ENCODE measurements at regions of chr15 and their contacts with region 1.

Region 1: GRCh38 chr15:59372352-59373211 is at the start of gene MYO1E:
- DNase-seq: peak; percentile 92
- H3K4me3 ChIP-seq: peak within 1 kb of the TSS; percentile 63 to 84 (median 74)
- H3K27ac ChIP-seq: peak within 1 kb of the TSS; percentile 94 to 96 (median 96)
- H3K4me1 ChIP-seq: peaks cover 0 to 32% (median 7%) of the 10 kb centered on the region in 4 donors
- H3K27me3 ChIP-seq: no peaks in the 10 kb centered on the region
- CTCF ChIP-seq: no peak
- EP300 ChIP-seq: no peak
- POLR2A ChIP-seq: peak; percentile 98
- total RNA-seq, gene MYO1E: 131 to 388 (median 345) TPM

Region 2: GRCh38 chr15:57994221-57995049 is 1378.1 kb before region 1 on chr15:
- in situ Hi-C with region 1: no loop called
- intact Hi-C with region 1: loop called (anchors 5 kb)
- DNase-seq: no peak
- H3K4me3 ChIP-seq: no peak overlapping the region
- H3K27ac ChIP-seq: no peak overlapping the region
- H3K4me1 ChIP-seq: peaks cover 0 to 6% (median 3%) of the 10 kb centered on the region in 4 donors
- H3K27me3 ChIP-seq: peaks cover 15% of the 10 kb centered on the region
- CTCF ChIP-seq: no peak
- EP300 ChIP-seq: no peak
- POLR2A ChIP-seq: no peak

Region 3: DNA sequence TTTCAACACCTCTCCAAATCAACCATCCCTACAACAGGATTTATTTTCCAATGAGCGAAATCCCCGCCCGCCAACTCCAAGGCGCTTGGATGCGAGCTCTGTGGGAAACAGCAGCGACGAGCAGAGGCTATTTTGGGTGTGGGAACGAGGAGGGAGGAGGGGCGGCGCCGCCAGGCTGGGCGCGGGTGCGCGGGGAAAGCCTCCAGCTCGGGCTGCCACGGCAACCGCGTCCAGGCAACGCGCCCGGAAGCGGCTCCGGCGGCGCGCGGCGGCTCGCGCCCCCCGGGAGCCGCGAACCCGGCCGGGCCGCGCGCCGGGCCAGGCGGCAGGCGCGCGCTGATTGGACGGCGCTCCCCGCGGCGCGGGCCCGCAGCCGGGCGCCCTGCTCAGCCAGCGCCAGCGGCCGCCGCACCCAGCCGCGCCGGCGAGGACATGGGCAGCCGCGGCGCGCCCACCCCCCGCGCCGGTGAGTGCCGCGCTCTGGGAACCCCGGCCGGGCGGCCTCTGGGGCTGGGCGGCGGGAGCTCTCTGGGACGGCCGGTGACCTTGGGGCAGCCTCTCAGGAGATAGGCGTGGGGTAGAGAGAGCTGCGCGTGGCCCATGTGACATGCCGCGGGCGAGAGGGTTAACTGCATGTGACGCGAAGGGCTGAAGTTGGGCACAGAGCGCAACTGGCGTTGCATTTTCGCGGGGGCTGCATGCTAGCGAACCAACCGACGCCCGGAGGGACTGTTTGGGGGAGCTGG is 65.4 kb after region 1 on chr15 and contains the start of gene FAM81A:
- in situ Hi-C with region 1: no loop called
- intact Hi-C with region 1: loop called (anchors 5 kb)
- DNase-seq: peak; percentile 80
- H3K4me3 ChIP-seq: peak within 1 kb of the TSS; percentile 30 to 58 (median 43)
- H3K27ac ChIP-seq: peak within 1 kb of the TSS in 3 of 4 donors; percentile 53 to 57 (median 55)
- H3K4me1 ChIP-seq: peaks cover 0 to 17% (median 15%) of the 10 kb centered on the region in 4 donors
- H3K27me3 ChIP-seq: peaks cover 18% of the 10 kb centered on the region
- CTCF ChIP-seq: no peak
- EP300 ChIP-seq: no peak
- POLR2A ChIP-seq: no peak
- total RNA-seq, gene FAM81A: 0.80 to 8.4 (median 4.6) TPM in 3 of 4 donors, not detected in the other

Measured in transverse colon (tissue), 4 donors.